Cardiac septum (tissue), 1 donor: ENCODE measurements at regions of chr7 and their contacts with region 1.

Region 1: GRCh38 chr7:143380255-143380645 is 895 bp upstream of the ZYX start:
- DNase-seq: peak; percentile 95

Region 2: DNA sequence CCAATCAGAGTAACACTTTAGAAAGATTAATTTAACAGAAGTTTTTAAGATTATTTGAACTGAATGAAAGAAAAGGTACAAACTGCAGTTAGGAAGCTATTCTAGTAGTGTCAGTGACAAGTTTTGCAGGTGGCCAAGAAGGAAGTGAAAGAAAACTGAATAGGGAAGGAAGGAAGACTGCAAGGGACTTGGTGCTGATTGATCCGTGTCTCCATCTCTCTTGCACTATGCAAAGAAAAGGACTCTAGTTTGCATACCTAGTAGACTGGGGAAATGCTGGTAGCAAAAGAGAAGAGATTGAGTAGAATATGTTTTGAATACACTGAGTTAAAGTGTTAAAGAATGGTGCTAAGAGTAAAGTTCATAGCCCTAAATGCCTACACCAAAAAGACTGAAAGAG is 295.1 kb before region 1 on chr7:
- intact Hi-C with region 1: no loop called
- DNase-seq: no peak

Region 3: GRCh38 chr7:143287935-143288826 is 92.1 kb before region 1 on chr7 and contains the start of gene CASP2:
- intact Hi-C with region 1: loop called (anchors 5 kb)
- DNase-seq: peak; percentile 99
- total RNA-seq, gene CASP2: 12.6 TPM

Region 4: DNA sequence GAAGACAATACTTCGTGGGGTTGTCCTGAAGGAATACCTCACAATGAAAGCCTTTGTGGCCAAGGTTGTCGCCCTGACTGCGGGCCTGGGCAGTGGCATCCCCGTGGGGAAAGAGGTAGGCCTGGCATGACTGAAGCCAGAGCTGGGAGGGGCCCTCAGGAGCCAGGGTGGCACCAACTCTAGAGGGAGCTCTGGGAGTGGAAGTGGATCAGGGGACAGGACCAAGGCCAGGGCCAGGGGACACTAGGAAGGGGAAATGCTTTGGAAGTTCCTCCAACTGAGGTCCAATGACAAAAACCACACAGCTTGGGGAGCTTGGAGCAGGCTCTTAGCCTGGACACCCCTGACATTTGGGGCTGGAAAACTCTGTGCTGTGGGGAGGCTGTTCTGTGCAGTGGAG is 58.5 kb before region 1 on chr7:
- intact Hi-C with region 1: no loop called
- DNase-seq: no peak

Region 5: DNA sequence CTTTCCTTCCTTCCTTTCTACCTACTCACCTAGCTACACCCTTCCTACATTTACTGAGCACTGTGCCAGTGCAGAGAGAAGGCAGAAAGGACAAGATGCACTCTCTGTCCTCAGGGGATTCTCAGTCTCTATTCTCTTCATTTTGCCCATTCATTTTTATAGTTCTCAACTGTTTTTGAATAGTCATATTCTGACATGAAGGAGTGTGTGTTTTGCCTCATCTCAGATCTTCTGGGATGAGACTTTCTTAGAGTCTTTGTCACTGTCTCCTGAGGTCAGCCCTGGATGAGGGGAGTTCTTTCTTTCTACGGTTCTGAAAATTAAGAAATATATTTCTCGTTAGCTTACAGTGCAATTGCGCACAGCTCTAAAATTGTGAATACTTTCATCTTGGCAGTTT is 43.0 kb before region 1 on chr7:
- intact Hi-C with region 1: no loop called
- DNase-seq: no peak

Region 6: DNA sequence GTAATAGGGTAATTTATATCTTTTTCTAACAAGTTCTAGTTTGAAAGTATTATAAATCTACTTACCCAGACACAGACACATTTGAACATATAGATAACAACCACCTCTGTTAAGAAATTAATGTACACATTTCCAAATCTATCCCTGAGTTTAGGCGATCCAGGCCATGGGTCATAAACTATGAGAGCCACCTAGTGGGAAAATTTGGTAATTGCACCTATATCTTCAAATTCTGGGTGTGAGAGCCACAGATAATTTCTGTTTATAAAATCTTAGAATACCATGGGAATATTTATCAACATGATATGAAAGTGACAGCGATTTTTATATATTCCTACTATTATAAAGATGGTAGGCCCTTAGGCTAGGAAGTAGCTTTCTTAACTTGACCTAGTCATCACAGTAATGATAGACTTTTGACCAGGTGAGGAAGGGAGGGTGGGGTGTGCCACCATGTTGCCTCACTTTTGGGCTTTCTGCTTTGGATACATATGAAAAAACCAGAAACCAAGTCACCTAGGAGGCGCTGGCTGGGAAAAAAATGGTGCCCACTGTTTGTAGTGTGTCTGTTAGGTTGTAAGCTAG is 36.4 kb after region 1 on chr7:
- intact Hi-C with region 1: loop called (anchors 5 kb)
- DNase-seq: no peak

Region 7: GRCh38 chr7:143434660-143435059 is 54.4 kb after region 1 on chr7:
- intact Hi-C with region 1: no loop called
- DNase-seq: no peak

Region 8: GRCh38 chr7:143504937-143505297 is 124.7 kb after region 1 on chr7:
- intact Hi-C with region 1: loop called (anchors 5 kb)
- DNase-seq: no peak

Region 9: DNA sequence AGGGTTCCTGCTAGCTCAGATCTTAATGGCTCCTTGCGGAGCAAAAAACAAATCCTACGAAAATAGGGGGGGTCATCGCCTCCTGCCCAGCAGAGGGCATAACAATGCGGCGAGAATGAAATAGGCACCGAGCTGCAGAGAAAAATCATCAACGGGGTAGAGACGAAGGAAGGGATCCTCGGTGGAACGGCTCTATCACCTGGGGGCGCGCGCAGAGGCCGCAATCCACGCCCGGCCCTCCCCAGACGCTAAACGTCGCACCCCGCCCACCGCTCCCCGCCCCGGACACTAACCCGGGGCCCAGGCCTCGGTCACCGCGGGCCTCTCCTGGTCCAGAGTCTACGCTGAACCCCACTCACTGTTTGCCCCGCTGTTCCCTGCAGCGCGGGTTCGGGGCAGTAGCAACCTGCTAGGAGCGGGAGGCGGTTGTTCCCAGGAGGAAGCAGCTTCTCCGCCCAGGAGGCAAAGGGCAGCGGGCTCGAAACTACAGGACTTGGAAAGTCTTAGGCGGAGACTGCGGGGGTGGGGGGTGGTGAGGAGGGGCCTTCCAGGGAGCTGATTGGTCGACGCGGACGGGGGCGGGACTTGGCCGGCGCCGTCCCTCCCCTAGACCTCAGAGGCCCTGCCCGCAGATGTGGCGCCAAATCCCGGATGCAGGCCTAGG is 521.5 kb after region 1 on chr7 and contains the start of gene TCAF1:
- intact Hi-C with region 1: loop called (anchors 10 kb)
- DNase-seq: peak; percentile 98
- total RNA-seq, gene TCAF1: 46.3 TPM